ENCODE measurements at regions of chr13 and their contacts with region 1.

Region 1: GRCh38 chr13:29850224-29850898 is at the start of gene UBL3:
- DNase-seq: peak; percentile 88 to 97 (median 92)
- ATAC-seq: peak; percentile 84 to 89
- H3K4me3 Mint-ChIP-seq: peak within 1 kb of the TSS; percentile 91 to 99 (median 96)
- H3K27ac Mint-ChIP-seq: peak within 1 kb of the TSS; percentile 89 to 100 (median 100)
- H3K4me1 Mint-ChIP-seq: peaks cover 17 to 40% (median 28%) of the 10 kb centered on the region in 4 donors
- H3K27me3 Mint-ChIP-seq: no peaks in the 10 kb centered on the region
- polyA plus RNA-seq, gene UBL3: 26.5 to 39.2 (median 26.8) TPM

Region 2: GRCh38 chr13:29595380-29596063 is 254.8 kb before region 1 on chr13 and contains the start of gene SLC7A1:
- POLR2A ChIA-PET with region 1: interaction called, 10 read pairs
- DNase-seq: peak; percentile 69 to 87 (median 84)
- ATAC-seq: peak; percentile 88 to 89
- H3K4me3 Mint-ChIP-seq: peak within 1 kb of the TSS; percentile 82 to 93 (median 90)
- H3K27ac Mint-ChIP-seq: peak within 1 kb of the TSS; percentile 43 to 96 (median 92)
- H3K4me1 Mint-ChIP-seq: peaks cover 18 to 47% (median 37%) of the 10 kb centered on the region in 4 donors
- H3K27me3 Mint-ChIP-seq: peaks cover 0 to 4% (median 0%) of the 10 kb centered on the region in 5 donors
- polyA plus RNA-seq, gene SLC7A1: 2.0 to 5.3 (median 2.9) TPM

Region 3: GRCh38 chr13:29935309-29935981 is 85.1 kb after region 1 on chr13:
- POLR2A ChIA-PET with region 1: interaction called, 69 read pairs
- DNase-seq: peak; percentile 18 to 84 (median 76)
- ATAC-seq: peak; percentile 94 to 95
- H3K4me3 Mint-ChIP-seq: peak overlapping the region; percentile 79 to 96 (median 89)
- H3K27ac Mint-ChIP-seq: peak overlapping the region; percentile 69 to 96 (median 92)
- H3K4me1 Mint-ChIP-seq: peaks cover 30 to 51% (median 44%) of the 10 kb centered on the region in 4 donors
- H3K27me3 Mint-ChIP-seq: peaks cover 0 to 2% (median 0%) of the 10 kb centered on the region in 5 donors

Region 4: DNA sequence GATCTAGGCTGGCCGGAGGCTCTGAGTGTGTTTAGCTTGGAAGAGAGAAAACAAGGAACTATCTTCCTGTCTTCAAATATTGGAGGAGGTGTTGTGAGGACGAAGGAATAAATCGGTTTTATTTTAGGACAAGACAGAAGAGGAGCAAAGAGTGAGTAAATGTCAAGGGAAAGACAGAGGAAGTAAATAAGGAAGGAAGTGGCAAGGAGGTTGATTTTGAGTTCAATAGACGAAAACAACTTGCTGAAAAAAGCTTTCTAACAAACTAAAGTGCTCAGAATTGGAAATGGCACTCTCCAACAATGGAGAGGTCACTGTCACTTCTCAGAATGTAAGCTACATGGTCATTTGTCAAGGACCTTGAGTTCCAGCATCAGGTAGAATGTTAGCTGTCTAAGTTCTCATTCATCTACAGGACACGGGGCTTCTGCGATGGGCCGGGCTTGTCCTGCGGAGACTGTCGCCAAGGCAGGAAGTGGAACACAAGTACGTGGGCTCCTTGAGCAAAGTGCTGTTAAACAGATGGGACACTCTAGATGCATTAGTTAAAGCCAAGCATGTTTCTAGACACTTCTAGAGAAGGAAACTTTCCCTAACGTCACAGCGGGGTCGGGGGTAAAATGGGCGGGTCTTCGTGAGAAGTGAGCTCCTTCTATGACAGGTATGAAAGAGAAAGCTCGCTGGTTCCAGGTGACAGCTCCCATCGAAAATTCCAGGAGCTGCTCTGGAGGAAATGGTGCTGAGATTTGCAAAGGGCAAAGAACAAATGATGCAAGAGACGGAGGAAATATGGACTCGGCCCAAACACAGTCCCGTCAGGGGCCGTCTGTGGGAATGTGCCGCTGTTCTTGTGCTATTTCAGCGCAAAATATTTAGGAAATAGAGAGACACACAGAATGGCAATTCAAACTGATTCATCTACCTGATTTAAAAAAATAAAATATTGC is 104.0 kb after region 1 on chr13:
- POLR2A ChIA-PET with region 1: interaction called, 18 read pairs
- DNase-seq: peak in 9 of 10 donors; percentile 32 to 78 (median 64)
- ATAC-seq: peak; percentile 72 to 85
- H3K4me3 Mint-ChIP-seq: peak overlapping the region; percentile 76 to 94 (median 89)
- H3K27ac Mint-ChIP-seq: peak overlapping the region; percentile 63 to 98 (median 92)
- H3K4me1 Mint-ChIP-seq: peaks cover 30 to 68% (median 59%) of the 10 kb centered on the region in 4 donors
- H3K27me3 Mint-ChIP-seq: no peaks in the 10 kb centered on the region

Region 5: DNA sequence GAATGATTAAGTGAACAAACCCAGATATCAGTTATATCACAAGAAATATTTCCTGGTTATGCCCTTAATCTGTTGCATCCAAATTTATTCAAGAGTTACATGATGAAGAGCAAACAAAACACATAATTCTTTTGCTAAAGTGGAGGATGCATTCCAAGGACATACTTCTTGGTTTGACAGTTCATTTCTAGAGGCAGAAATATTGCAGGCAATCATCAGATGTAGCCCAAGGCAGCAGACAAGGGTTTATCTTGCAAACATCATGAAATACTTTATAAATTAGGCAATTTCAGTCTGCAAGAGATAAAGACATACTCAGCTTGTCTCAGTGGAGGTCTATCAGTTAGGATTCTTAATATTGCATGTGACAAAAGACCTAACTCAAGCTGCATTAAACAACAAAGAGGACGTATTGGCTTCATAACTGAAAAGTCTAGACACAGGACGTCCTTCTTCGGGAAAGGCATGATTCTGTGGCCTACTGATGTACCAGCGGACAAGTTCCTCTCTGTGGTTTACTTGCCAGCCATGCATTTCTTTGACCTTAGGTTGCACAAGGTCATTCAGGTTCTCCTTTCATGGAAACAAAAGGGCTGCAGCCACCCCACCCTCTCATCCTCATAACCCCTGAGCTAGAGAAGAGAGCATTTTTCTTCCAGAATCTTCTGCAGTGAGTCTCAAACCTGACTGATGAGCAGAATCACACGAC is 252.9 kb after region 1 on chr13:
- POLR2A ChIA-PET with region 1: no interaction called
- DNase-seq: no peak
- ATAC-seq: no peak
- H3K4me3 Mint-ChIP-seq: no peak overlapping the region
- H3K27ac Mint-ChIP-seq: no peak overlapping the region
- H3K4me1 Mint-ChIP-seq: no peaks in the 10 kb centered on the region
- H3K27me3 Mint-ChIP-seq: peaks cover 0 to 3% (median 0%) of the 10 kb centered on the region in 5 donors

Region 6: DNA sequence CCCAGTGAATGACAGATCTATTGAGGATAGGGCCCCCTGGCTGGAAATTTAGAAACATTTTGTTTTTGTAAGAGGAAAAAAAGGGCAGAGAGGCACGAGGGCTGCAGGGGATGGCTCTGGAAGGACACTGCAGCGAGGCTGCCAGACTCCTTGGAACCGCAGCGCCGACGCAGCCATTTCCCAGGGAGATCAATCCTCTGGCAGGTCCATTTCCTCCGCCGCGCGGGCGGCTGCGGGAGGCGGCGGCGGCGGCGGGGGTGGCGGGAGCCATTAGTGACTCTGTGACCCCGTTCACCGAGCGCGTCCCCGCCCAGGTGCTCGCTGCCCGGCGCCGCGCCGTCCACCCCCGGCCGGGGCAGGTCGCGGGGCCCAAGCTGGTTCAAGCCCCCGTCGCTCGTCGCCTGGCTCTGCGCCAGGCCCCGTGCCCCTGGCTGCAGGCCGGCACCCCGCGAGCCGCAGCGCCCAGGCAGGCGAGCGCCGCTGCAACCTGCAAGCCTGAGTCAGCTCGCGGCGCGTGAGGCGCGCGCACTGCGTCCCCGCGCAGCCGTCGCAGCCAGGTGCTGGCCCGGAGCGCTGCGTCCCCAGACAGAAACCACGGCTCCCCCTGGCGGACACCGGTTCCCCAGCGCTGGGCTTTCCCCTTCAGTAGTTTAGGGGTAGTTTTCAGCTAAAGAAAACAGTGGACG is 264.4 kb after region 1 on chr13:
- POLR2A ChIA-PET with region 1: interaction called, 23 read pairs
- DNase-seq: peak; percentile 81 to 94 (median 92)
- ATAC-seq: peak; percentile 93 to 95
- H3K4me3 Mint-ChIP-seq: peak overlapping the region; percentile 78 to 91 (median 84)
- H3K27ac Mint-ChIP-seq: peak overlapping the region in 9 of 10 donors; percentile 27 to 89 (median 63)
- H3K4me1 Mint-ChIP-seq: peaks cover 21 to 31% (median 30%) of the 10 kb centered on the region in 4 donors
- H3K27me3 Mint-ChIP-seq: no peaks in the 10 kb centered on the region